Activated naive CD4-positive, alpha-beta T cell treated with anti-CD3 and anti-CD28 coated beads for 36 hours (primary cell): ENCODE measurements at regions of chr11 and their contacts with region 1.

Region 1: DNA sequence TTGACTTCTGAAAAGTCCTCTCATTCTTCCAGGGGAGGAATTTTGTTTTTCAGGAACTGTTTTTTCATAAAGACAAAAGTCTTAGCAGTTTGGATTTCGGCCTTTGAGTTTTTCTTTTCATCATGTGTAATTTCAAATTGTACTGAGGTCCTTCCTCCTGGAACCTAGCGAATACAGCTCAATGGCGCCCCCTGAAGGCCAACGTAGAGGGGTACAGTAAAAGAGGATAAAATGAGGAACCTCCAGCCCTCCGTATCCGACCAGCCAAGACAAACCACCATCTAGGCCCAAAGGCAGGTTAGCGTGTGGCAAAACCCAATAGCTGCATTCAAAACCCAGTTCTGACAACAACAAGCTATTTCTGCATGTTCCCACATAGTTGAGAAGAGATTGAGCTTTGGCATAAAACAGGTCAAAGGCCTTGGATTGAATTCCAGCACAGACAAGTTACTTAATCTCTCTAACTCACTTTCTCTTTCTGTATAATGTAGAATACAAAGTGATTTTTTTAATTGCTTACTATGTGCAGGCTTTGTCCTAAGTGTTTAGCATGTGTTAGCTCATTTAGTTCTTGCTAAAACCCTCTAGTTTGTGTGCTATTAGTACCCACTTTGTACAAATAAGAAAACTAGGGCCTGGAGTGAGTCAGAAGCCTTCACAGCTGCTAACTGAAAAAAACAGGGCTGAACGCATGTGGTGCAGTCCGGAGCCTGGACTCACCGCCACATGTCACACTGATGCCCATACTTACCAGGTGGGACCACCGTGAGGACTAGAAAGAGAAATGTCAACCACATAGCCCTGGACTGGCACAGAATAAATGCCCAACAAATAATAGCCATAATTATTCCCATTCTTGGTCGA is 43.2 kb upstream of the ETS1 start:
- DNase-seq: peak; percentile 97
- H3K4me3 Mint-ChIP-seq: peak overlapping the region; percentile 60
- H3K27ac Mint-ChIP-seq: peak overlapping the region; percentile 84
- H3K4me1 Mint-ChIP-seq: peaks cover 59% of the 10 kb centered on the region
- H3K27me3 Mint-ChIP-seq: no peaks in the 10 kb centered on the region

Region 2: DNA sequence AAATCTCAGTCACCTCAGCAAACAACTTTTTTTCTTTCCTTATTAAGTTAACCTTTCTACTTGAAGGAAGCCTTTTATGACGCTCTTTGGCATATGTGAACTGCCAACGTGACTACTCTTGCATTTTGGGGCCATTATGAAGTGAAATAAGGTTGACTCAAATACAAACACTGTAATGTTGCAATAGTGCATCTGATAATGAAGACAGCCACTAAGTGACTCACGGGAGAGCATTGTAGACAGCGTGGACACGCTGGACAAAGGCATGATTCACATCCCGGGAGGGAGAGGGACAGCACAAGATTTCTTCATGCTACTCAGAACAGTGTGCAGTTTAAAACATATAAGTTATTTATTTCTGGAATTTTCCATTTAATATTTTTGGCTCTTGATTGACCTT is 604.0 kb before region 1 on chr11:
- CTCF ChIA-PET with region 1: interaction called, 3 read pairs
- intact Hi-C with region 1: loop called (anchors 1 kb)
- DNase-seq: no peak
- H3K4me3 Mint-ChIP-seq: no peak overlapping the region
- H3K27ac Mint-ChIP-seq: no peak overlapping the region
- H3K4me1 Mint-ChIP-seq: peaks cover 4% of the 10 kb centered on the region
- H3K27me3 Mint-ChIP-seq: no peaks in the 10 kb centered on the region

Region 3: DNA sequence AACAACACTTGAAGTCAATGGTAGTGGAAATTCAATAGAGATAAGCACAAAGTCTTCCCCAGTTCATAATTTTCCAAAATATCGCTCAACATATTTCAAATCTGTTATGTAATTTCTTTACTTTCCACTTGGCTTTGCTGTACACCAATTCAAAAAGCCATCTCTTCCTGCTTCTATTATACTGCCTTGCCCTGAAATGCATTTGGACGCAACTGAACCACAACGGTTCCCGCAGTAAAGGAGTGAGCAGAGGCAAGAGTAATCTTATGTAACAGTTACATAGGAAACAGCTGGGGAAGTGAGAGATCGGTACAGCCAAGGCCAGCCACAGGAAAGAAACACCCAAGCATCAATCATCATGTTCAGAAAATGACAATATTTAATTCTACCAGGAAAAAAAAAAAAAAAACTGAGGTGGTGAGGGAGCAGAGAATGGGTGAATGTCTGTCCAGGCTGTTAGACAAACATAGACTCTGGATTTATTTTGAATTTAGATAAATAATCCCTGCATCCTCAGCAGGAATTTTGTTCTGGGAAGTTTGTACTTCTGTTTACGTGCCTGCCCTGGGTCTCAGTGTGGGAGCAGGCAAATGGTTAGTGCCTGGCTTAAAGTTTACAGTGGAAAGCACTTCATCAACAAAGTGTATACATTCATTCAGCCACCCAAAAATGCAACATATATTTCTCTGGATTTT is 435.4 kb before region 1 on chr11:
- CTCF ChIA-PET with region 1: interaction called, 16 read pairs
- intact Hi-C with region 1: loop called (anchors 1 kb)
- DNase-seq: peak; percentile 77
- H3K4me3 Mint-ChIP-seq: peak overlapping the region; percentile 6
- H3K27ac Mint-ChIP-seq: peak overlapping the region; percentile 32
- H3K4me1 Mint-ChIP-seq: peaks cover 42% of the 10 kb centered on the region
- H3K27me3 Mint-ChIP-seq: no peaks in the 10 kb centered on the region

Region 4: GRCh38 chr11:128422576-128423370 is 207.8 kb before region 1 on chr11:
- CTCF ChIA-PET with region 1: interaction called, 4 read pairs
- intact Hi-C with region 1: loop called (anchors 1 kb)
- DNase-seq: peak; percentile 96
- H3K4me3 Mint-ChIP-seq: peak overlapping the region; percentile 44
- H3K27ac Mint-ChIP-seq: peak overlapping the region; percentile 75
- H3K4me1 Mint-ChIP-seq: peaks cover 63% of the 10 kb centered on the region
- H3K27me3 Mint-ChIP-seq: no peaks in the 10 kb centered on the region

Region 5: GRCh38 chr11:128522055-128522942 is 108.3 kb before region 1 on chr11:
- CTCF ChIA-PET with region 1: interaction called, 86 read pairs
- intact Hi-C with region 1: loop called (anchors 1 kb)
- DNase-seq: peak; percentile 92
- H3K4me3 Mint-ChIP-seq: peak overlapping the region; percentile 96
- H3K27ac Mint-ChIP-seq: peak overlapping the region; percentile 97
- H3K4me1 Mint-ChIP-seq: peaks cover 42% of the 10 kb centered on the region
- H3K27me3 Mint-ChIP-seq: no peaks in the 10 kb centered on the region

Region 6: GRCh38 chr11:128603752-128604414 is 26.7 kb before region 1 on chr11:
- CTCF ChIA-PET with region 1: interaction called, 24 read pairs
- intact Hi-C with region 1: loop called (anchors 1 kb)
- DNase-seq: no peak
- H3K4me3 Mint-ChIP-seq: no peak overlapping the region
- H3K27ac Mint-ChIP-seq: no peak overlapping the region
- H3K4me1 Mint-ChIP-seq: peaks cover 59% of the 10 kb centered on the region
- H3K27me3 Mint-ChIP-seq: no peaks in the 10 kb centered on the region